A673 (cell line): ENCODE measurements at regions of chr1 and their contacts with region 1.

Region 1: GRCh38 chr1:50405814-50406213 is 17.4 kb downstream of the DMRTA2 start:
- DNase-seq: no peak
- H3K4me3 ChIP-seq: no peak overlapping the region
- H3K27ac ChIP-seq: no peak overlapping the region
- H3K4me1 ChIP-seq: no peaks in the 10 kb centered on the region
- H3K27me3 ChIP-seq: peaks cover 32% of the 10 kb centered on the region
- CTCF ChIP-seq: no peak

Region 2: DNA sequence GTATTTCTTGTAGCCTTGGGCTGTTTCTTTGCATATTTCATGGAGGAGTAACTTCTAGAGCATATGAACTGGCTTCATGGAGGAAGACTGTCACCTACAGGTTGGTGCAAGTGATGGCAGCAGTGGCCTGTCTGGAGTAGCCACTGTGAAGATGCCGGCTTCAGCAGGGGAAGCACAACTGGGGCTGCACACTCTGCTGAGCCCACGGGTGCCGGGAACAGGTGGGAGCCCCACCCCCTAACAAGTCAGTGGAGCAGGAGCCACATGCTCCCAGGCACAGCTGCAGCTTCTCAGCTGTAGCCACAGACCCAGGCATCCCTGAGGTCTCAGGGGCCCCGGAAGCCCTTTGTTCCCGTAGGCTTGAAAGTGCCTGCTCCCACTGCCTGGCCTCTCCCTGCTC is 653.0 kb after region 1 on chr1:
- CTCF ChIA-PET with region 1: no interaction called
- POLR2A ChIA-PET with region 1: interaction called, 13 read pairs
- intact Hi-C with region 1: no loop called
- DNase-seq: peak; percentile 37
- H3K4me3 ChIP-seq: no peak overlapping the region
- H3K27ac ChIP-seq: no peak overlapping the region
- H3K4me1 ChIP-seq: no peaks in the 10 kb centered on the region
- H3K27me3 ChIP-seq: no peaks in the 10 kb centered on the region
- CTCF ChIP-seq: peak; percentile 53